Right cardiac atrium (tissue), 5 donors: ENCODE measurements at regions of chr16 and their contacts with region 1.

Region 1: GRCh38 chr16:83826146-83826913 is 18.6 kb downstream of the HSBP1 start:
- DNase-seq: peak; percentile 83 to 95 (median 93)
- ATAC-seq: peak; percentile 82 to 91
- H3K4me3 ChIP-seq: no peak overlapping the region
- H3K27ac ChIP-seq: no peak overlapping the region
- H3K4me1 ChIP-seq: no peaks in the 10 kb centered on the region
- H3K27me3 ChIP-seq: no peaks in the 10 kb centered on the region

Region 2: DNA sequence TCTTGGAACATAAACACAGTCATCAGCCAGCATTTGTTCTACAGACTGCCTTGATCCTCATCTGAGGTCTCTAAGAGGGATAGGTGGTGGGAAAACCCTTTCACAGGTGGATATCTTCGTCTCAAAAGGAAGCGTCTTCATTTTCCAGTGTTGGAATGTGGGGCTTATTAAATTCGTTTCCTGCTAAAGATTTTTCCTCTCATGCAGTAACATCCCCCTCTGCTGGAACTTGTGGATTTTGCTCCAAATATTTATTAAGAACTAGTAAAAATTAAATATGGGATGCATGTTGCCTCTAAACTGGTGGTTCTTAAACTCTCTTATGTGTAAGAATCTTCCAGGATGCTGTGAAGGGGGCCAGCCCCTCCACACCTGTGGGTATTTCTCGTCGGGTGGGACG is 52.5 kb after region 1 on chr16:
- intact Hi-C with region 1: loop called (anchors 2 to 10 kb)
- DNase-seq: no peak
- ATAC-seq: no peak
- H3K4me3 ChIP-seq: no peak overlapping the region
- H3K27ac ChIP-seq: no peak overlapping the region
- H3K4me1 ChIP-seq: no peaks in the 10 kb centered on the region
- H3K27me3 ChIP-seq: no peaks in the 10 kb centered on the region

Region 3: GRCh38 chr16:83887081-83887480 is 60.8 kb after region 1 on chr16:
- intact Hi-C with region 1: loop called in 1 of 4 experiments (anchors 10 kb)
- DNase-seq: peak in 1 of 3 donors; percentile 60
- ATAC-seq: no peak
- H3K4me3 ChIP-seq: no peak overlapping the region
- H3K27ac ChIP-seq: no peak overlapping the region
- H3K4me1 ChIP-seq: no peaks in the 10 kb centered on the region
- H3K27me3 ChIP-seq: no peaks in the 10 kb centered on the region

Region 4: DNA sequence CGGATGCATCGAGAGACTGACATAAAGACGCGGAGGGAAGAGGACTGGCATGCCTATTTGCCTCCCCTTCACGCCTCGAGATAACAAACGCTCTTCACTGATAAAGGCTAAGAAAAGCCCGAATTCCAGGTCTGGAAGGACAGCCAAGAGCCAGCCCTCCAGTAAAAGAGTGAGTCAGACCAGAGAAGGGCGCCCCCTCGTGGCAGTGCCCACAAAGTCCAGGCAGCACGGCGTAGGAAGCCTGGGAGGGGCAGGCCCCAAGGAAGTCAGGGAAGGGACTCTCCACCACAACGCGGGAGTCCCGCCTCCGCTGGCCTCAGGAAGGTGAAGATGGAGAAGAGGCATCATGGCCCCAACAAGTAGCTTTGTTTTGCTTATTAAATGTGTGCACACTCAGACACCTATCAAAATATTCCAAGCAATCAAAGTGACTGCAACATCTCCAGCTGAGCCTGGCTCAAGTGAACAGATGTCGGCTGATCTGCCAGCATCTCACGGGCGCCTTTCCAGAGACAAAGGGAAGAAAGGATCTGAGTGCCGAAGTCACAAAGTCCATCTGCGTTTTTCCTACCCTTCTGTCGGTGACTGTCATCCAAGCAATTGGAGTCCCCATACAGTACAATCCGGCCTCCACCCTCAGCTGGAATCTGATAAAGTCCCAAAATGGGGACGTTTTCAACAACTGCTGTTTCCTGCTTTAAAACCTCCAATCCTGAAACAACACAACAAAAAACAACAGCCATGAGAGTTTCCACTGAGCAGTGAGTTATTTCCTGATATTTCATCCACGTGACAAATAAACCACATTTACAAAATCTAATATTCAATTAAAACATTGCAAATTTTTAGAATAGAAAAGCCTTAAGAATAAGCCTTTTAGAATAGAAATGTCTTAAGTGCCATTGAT is 236.7 kb after region 1 on chr16:
- intact Hi-C with region 1: loop called in 2 of 4 experiments (anchors 5 to 10 kb)
- DNase-seq: peak; percentile 85 to 92 (median 92)
- ATAC-seq: peak; percentile 91 to 93
- H3K4me3 ChIP-seq: no peak overlapping the region
- H3K27ac ChIP-seq: peak overlapping the region; percentile 28
- H3K4me1 ChIP-seq: peaks cover 2% of the 10 kb centered on the region
- H3K27me3 ChIP-seq: no peaks in the 10 kb centered on the region